ENCODE measurements at regions of chr18 and their contacts with region 1.

Region 1: DNA sequence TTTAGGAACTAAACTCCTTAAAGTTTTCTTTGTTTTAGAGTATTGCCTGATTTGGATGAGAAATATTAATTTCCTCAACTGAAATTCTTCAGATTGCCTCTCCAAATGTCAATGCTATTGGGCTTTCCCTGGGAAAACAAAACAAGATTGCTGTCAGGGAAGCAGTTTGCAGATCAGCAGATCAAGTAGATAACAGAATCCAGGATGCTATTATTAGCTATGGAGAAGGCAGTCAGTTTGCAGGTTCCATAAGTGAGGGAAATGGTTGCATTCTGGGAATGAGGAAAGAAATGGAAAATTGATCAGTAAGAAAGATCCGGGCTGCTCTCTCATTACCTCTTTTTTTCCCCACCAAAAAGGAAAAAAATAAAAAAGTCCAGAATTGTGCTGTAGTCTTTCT is 11.0 kb downstream of the LINC00305 start:
- DNase-seq: no peak
- ATAC-seq: no peak
- H3K4me3 ChIP-seq: no peak overlapping the region
- H3K4me3 Mint-ChIP-seq: no peak overlapping the region
- H3K27ac ChIP-seq: no peak overlapping the region
- H3K27ac Mint-ChIP-seq: no peak overlapping the region
- H3K4me1 ChIP-seq: no peaks in the 10 kb centered on the region
- H3K4me1 Mint-ChIP-seq: no peaks in the 10 kb centered on the region
- H3K27me3 ChIP-seq: no peaks in the 10 kb centered on the region
- H3K27me3 Mint-ChIP-seq: no peaks in the 10 kb centered on the region
- CTCF ChIP-seq: no peak

Region 2: GRCh38 chr18:64185987-64186386 is 48.1 kb after region 1 on chr18:
- CTCF ChIA-PET with region 1: no interaction called
- POLR2A ChIA-PET with region 1: no interaction called
- intact Hi-C with region 1: loop called in 1 of 2 experiments (anchors 5 kb)
- DNase-seq: no peak
- ATAC-seq: no peak
- H3K4me3 ChIP-seq: no peak overlapping the region
- H3K4me3 Mint-ChIP-seq: no peak overlapping the region
- H3K27ac ChIP-seq: no peak overlapping the region
- H3K27ac Mint-ChIP-seq: no peak overlapping the region
- H3K4me1 ChIP-seq: no peaks in the 10 kb centered on the region
- H3K4me1 Mint-ChIP-seq: no peaks in the 10 kb centered on the region
- H3K27me3 ChIP-seq: no peaks in the 10 kb centered on the region
- H3K27me3 Mint-ChIP-seq: no peaks in the 10 kb centered on the region
- CTCF ChIP-seq: no peak

Measured in CD8-positive, alpha-beta T cell (primary cell).